Sciatic nerve (tissue), 2 donors: ENCODE measurements at regions of chr3 and their contacts with region 1.

Region 1: GRCh38 chr3:167467848-167468611 is 5.8 kb downstream of the SERPINI2 start:
- DNase-seq: no peak
- ATAC-seq: no peak

Region 2: DNA sequence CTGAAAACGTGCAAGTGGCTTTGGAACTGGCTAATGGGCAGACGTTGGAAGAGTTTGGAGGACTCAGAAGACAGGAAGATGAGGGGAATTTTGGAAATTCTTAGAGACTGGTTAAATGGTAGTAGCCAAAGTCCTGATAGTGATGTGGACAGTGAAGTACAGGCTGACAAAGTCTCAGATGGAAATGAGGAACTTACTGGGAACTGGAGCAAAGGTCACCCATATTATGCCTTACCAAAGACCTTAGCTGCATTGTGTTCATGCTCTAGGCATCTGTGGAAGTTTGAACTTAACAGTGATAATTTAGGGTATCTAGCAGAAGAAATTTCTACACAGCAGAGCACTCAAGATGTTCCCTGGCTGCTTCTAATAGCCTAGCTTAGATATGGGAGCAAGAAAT is 34.4 kb after region 1 on chr3:
- intact Hi-C with region 1: loop called (anchors 1 kb)
- DNase-seq: no peak
- ATAC-seq: no peak